ENCODE measurements at regions of chr20 and their contacts with region 1.

Region 1: GRCh38 chr20:51899668-51900067 is 97.3 kb upstream of the SALL4 start:
- DNase-seq: no peak
- ATAC-seq: no peak
- H3K4me3 ChIP-seq: no peak overlapping the region
- H3K27ac ChIP-seq: no peak overlapping the region
- H3K4me1 ChIP-seq: no peaks in the 10 kb centered on the region
- H3K27me3 ChIP-seq: no peaks in the 10 kb centered on the region

Region 2: DNA sequence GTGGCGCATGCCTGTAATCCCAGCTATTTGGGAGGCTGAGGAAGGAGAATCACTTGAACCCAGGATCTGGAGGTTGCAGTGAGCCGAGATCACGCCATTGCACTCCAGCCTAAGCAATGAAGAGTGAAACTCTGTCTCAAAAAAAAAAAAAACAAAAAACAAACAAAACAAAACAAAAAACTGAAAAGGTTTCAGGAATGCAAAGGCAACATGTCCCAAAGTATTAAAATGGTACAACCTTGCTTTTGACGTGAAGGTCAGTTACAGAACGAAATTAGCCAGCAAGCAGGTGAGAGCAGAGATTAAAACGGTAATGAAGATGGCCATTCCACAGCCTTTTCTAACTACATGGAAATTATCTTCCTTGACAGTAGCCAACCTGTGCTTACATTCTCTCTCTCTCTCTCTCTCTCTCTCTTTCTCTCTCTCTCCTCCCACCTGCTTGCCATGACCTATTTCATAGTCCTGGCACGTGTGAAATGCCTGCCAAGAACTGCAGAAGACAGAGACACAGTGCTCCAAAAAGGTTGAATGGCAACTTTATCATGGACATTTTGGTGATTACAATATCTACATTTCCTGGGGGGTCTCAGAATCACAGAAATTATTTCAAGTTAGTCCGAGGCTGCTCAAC is 58.9 kb before region 1 on chr20:
- intact Hi-C with region 1: loop called in 1 of 4 experiments (anchors 10 kb)
- DNase-seq: no peak
- ATAC-seq: no peak
- H3K4me3 ChIP-seq: no peak overlapping the region
- H3K27ac ChIP-seq: no peak overlapping the region
- H3K4me1 ChIP-seq: no peaks in the 10 kb centered on the region
- H3K27me3 ChIP-seq: no peaks in the 10 kb centered on the region